B cell (primary cell): ENCODE measurements at regions of chr7 and their contacts with region 1.

Region 1: GRCh38 chr7:16770662-16771329 is 17.2 kb downstream of the TSPAN13 start:
- DNase-seq: no peak
- ATAC-seq: no peak
- H3K4me3 ChIP-seq: no peak overlapping the region
- H3K4me3 Mint-ChIP-seq: peak overlapping the region; percentile 40
- H3K27ac ChIP-seq: peak overlapping the region in 1 of 2 donors; percentile 55
- H3K27ac Mint-ChIP-seq: peak overlapping the region; percentile 44
- H3K4me1 ChIP-seq: peaks cover 23 to 45% of the 10 kb centered on the region in 2 donors
- H3K4me1 Mint-ChIP-seq: peaks cover 61% of the 10 kb centered on the region
- H3K27me3 ChIP-seq: no peaks in the 10 kb centered on the region
- H3K27me3 Mint-ChIP-seq: no peaks in the 10 kb centered on the region
- CTCF ChIP-seq: no peak

Region 2: DNA sequence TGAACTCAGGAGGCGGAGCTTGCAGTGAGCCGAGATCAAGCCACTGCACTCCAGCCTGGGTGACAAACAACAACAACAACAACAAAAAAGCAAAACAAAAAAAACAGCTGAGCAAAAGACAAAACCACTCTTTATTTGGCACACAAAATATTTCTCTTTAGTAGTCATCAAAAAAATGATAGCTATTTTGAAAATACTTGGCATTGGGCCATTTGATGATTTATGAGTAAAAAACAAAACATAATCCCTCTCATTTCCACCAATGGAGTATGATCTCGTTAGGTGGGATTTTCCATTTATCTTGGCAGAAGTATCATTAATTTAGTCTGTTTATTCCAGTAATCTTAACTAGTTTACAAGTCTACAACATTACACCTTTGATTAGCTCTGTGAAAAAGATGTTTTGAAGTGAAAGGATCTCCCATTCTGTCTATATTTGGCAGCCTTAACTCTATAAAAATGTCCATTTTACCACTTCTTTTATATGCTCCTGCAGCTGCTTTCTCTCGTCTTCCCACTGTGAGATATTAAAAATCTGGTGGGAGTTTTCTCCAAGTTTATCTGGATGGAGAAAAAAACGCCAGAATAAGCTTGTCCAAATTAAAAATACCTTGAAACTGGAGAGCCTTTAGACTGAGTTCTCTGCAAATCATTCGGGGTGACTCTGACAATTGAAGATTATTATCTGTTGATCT is 1150.2 kb before region 1 on chr7:
- CTCF ChIA-PET with region 1: no interaction called
- POLR2A ChIA-PET with region 1: no interaction called
- intact Hi-C with region 1: no loop called
- DNase-seq: no peak
- ATAC-seq: no peak
- H3K4me3 ChIP-seq: no peak overlapping the region
- H3K4me3 Mint-ChIP-seq: no peak overlapping the region
- H3K27ac ChIP-seq: no peak overlapping the region
- H3K27ac Mint-ChIP-seq: no peak overlapping the region
- H3K4me1 ChIP-seq: no peaks in the 10 kb centered on the region
- H3K4me1 Mint-ChIP-seq: no peaks in the 10 kb centered on the region
- H3K27me3 ChIP-seq: no peaks in the 10 kb centered on the region
- H3K27me3 Mint-ChIP-seq: no peaks in the 10 kb centered on the region
- CTCF ChIP-seq: no peak

Region 3: DNA sequence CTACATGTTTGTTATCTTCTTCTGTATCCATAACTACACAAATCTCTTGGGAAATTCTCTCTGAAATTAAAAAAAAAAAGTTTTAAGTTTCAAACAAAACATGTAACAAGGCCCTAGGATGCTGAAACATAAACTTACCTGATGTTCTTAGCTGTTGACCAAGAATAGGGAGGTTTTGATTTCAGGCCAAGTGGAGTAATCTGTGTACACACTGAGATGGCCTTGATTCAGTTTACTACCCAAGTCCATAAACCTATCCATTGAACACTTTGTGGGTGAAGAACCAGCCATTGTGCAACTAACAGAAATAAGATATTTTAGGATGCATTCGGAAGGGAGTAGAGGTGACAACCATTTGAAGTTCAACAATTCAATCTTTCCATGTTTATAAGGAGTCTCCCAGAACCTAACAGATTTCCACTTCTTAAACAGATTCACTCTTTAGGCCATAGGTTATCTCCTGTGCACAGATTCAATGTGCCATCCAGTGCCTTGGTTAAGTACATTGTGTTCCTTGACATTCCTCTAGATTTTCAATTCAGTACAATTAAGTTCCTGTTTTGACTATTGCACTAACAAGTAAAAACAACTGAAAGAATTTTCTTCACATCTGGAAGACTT is 492.5 kb before region 1 on chr7:
- CTCF ChIA-PET with region 1: no interaction called
- POLR2A ChIA-PET with region 1: no interaction called
- intact Hi-C with region 1: loop called (anchors 5 kb)
- DNase-seq: no peak
- ATAC-seq: no peak
- H3K4me3 ChIP-seq: no peak overlapping the region
- H3K4me3 Mint-ChIP-seq: no peak overlapping the region
- H3K27ac ChIP-seq: no peak overlapping the region
- H3K27ac Mint-ChIP-seq: no peak overlapping the region
- H3K4me1 ChIP-seq: no peaks in the 10 kb centered on the region
- H3K4me1 Mint-ChIP-seq: no peaks in the 10 kb centered on the region
- H3K27me3 ChIP-seq: no peaks in the 10 kb centered on the region
- H3K27me3 Mint-ChIP-seq: no peaks in the 10 kb centered on the region
- CTCF ChIP-seq: no peak